Heart right ventricle (tissue), 16 donors: ENCODE measurements at regions of chr2 and their contacts with region 1.

Region 1: DNA sequence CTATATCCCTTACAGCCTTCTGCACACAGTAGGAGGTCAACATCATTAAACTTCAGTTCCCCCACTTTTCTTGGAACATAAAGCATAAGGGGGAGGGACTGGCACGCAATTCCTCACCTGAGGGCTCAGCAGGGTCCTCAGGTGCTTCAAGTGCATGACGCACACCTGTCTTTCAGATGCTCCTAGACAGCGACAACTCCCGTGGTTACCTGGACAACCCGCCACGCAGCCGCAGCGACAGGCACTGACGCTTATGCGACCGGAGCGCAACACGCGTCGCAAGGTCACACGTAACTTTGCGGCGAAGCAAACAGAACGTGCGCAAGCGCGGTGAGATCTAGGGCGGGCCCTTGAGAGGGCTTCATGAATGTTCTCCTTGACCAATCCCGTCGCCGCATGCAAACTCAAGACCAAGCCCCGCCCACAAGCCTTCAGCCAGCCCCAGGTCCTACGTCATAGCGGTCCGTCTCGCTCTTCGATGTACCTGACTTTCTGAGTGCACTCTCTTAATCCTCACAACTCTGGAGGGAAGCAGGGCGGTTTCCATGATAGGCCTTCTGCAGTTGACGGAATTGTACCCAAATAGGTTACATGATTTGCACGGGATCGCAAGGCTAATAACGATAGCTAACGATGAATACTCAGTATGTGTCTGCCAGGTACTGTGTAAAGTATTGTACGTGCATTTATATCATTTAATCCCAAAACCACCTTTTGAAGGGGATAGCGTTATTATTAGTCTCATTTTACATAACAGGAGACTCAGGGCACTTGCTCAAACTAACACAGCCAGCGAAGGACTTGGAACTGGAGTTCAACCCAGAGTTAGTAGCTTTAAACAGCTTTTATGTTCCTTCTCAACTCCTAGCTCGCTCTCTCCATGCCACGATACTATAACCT is at the start of gene IFT172:
- DNase-seq: peak; percentile 97 to 99
- ATAC-seq: peak; percentile 96 to 100 (median 99)
- H3K4me3 ChIP-seq: peak within 1 kb of the TSS; percentile 22 to 96 (median 64)
- H3K27ac ChIP-seq: peak within 1 kb of the TSS in 9 of 10 donors; percentile 53 to 79 (median 63)
- H3K4me1 ChIP-seq: peaks cover 4 to 38% (median 15%) of the 10 kb centered on the region in 9 donors
- H3K27me3 ChIP-seq: peaks cover 0 to 11% (median 0%) of the 10 kb centered on the region in 7 donors
- CTCF ChIP-seq: no peak
- total RNA-seq, gene IFT172: 12.7 to 30.6 (median 16.1) TPM

Region 2: GRCh38 chr2:27527182-27527581 is 37.4 kb after region 1 on chr2:
- intact Hi-C with region 1: no loop called
- DNase-seq: no peak
- ATAC-seq: no peak
- H3K4me3 ChIP-seq: no peak overlapping the region
- H3K27ac ChIP-seq: no peak overlapping the region
- H3K4me1 ChIP-seq: no peaks in the 10 kb centered on the region
- H3K27me3 ChIP-seq: peaks cover 0 to 23% (median 0%) of the 10 kb centered on the region in 7 donors
- CTCF ChIP-seq: no peak

Region 3: DNA sequence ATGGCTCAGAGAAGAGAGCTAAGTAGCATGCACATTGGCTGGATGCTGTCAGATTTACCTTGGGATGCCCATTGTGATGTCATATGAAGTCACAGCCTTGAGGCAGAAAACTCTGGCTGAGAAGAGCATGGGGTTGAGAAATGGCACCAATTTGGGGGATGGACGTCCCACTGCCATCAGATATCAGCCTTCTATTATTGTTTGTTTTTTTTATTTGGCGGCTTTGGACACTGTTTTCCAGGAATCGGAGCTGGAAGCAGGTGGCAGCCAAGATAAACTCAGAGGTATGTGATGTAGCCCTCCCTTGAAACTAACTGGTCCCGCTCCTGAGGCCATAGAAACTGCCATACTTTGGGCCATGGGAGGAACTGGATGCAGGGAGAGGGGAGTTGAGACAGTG is 47.5 kb after region 1 on chr2:
- intact Hi-C with region 1: no loop called
- DNase-seq: no peak
- ATAC-seq: no peak
- H3K4me3 ChIP-seq: no peak overlapping the region
- H3K27ac ChIP-seq: no peak overlapping the region
- H3K4me1 ChIP-seq: no peaks in the 10 kb centered on the region
- H3K27me3 ChIP-seq: peaks cover 0 to 6% (median 0%) of the 10 kb centered on the region in 7 donors
- CTCF ChIP-seq: no peak

Region 4: GRCh38 chr2:27582695-27583389 is 93.1 kb after region 1 on chr2 and contains the start of gene ZNF512:
- intact Hi-C with region 1: loop called in 2 of 10 experiments (anchors 5 to 10 kb)
- DNase-seq: peak; percentile 89
- ATAC-seq: peak; percentile 95 to 98 (median 97)
- H3K4me3 ChIP-seq: peak within 1 kb of the TSS; percentile 45 to 91 (median 72)
- H3K27ac ChIP-seq: peak within 1 kb of the TSS in 9 of 10 donors; percentile 40 to 85 (median 75)
- H3K4me1 ChIP-seq: peaks cover 0 to 34% (median 20%) of the 10 kb centered on the region in 9 donors
- H3K27me3 ChIP-seq: no peaks in the 10 kb centered on the region
- CTCF ChIP-seq: peak in 1 of 9 donors; percentile 10
- total RNA-seq, gene ZNF512: 15.1 to 27.7 (median 20.3) TPM

Region 5: DNA sequence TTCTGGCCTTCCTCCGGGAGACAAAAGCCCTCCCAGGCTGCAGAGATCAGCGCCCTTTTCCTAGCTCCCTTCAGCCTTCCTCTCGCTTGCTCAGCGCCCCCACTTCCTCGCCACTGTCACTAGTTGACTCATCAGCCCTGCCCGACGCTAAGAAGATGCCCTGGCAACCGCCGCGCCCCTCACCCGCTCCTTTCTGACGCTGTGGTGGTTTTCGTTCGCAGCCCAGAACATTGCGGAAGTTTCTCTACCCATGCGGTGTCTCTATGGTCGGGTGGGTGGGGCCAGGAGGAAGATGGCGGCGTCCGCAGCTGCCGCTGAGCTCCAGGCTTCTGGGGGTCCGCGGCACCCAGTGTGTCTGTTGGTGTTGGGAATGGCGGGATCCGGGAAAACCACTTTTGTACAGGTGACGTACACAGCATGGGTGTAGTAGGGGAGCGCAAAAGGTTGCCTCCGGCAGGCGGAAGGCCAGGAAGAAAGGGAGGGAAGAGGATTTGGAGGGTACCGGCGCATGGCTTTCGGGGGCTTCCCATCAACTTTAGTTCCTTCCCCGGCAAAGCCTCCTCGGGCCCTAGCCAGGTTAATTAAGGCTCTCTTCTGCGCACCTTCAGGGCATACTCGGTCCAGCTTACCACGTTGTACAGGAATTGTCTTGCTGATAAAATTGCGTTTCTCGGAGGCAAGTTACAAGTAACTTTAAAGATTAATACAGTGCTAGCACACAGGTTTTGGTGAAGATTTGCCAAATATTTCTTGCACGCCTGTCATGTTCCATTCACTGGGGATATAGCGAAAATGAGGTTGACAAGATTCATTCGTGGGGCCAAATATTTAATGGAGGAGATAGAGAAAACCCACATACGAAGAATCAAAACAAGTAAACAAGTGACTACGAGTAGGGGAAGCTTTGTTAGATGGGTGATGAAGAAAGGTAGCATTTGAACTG is 139.3 kb after region 1 on chr2 and contains the starts of genes CCDC121 and GPN1:
- intact Hi-C with region 1: loop called in 2 of 10 experiments (anchors 10 kb)
- DNase-seq: peak; percentile 80 to 85
- ATAC-seq: peak; percentile 96 to 99 (median 98)
- H3K4me3 ChIP-seq: peak within 1 kb of the TSS; percentile 47 to 90 (median 76)
- H3K27ac ChIP-seq: peak within 1 kb of the TSS in 9 of 10 donors; percentile 49 to 91 (median 79)
- H3K4me1 ChIP-seq: peaks cover 4 to 43% (median 30%) of the 10 kb centered on the region in 9 donors
- H3K27me3 ChIP-seq: no peaks in the 10 kb centered on the region
- CTCF ChIP-seq: no peak
- total RNA-seq, gene CCDC121: 4.1 to 7.6 (median 6.0) TPM
- total RNA-seq, gene GPN1: 17.1 to 23.8 (median 19.7) TPM